Motor neuron (in vitro differentiated cells): ENCODE measurements at regions of chr4 and their contacts with region 1.

Region 1: GRCh38 chr4:156475322-156475721 is 496.3 kb downstream of the PDGFC start:
- ATAC-seq: peak in 4 of 8 experiments; percentile 30 to 79 (median 68)
- H3K4me3 ChIP-seq: no peak overlapping the region
- H3K27ac ChIP-seq: no peak overlapping the region
- H3K4me1 ChIP-seq: peaks cover 0 to 6% of the 10 kb centered on the region in 2 donors

Region 2: DNA sequence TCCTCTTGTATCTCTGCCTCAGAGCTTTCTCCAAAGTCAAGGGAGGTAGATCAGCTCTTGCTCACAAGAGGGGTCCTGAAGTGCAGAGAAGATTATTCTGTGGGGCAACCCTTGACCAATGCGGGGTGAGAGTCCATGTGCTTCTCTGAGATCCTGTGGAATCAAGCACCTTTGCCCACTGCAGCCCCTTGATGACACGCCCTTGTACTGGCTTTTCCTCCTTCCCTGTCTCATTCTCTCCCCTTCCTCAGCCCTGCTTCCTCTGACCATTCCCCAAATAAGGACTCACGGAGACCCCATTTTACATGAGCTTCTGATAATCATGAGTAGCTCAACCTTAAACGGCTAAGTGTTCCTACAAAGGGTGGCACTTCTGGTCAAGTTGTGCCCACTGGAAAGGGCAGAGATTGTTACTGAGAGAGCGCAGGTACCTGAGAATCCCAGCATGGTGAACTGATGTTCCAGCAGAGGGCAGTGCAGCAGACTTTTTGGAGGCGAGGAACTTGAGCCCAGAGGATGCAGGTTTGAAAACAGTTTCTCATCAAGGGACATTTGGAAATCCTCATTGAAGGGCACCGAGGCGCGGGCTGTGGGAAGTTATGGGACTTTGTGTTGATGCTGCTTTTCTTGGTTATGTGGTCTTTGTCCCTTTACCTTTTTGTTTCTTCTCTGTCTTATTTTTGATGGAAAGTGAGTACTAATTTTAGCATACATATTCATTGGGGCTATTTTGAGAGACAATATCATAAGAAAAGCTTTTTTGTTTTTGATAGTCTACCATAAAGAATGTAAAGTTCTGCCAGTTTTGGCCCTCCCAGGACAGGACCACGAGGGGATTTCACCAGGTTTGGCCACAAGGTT is 1492.9 kb before region 1 on chr4:
- in situ Hi-C with region 1: no loop called
- ATAC-seq: peak in 6 of 8 experiments; percentile 42 to 95 (median 70)
- H3K4me3 ChIP-seq: no peak overlapping the region
- H3K27ac ChIP-seq: no peak overlapping the region
- H3K4me1 ChIP-seq: no peaks in the 10 kb centered on the region

Region 3: DNA sequence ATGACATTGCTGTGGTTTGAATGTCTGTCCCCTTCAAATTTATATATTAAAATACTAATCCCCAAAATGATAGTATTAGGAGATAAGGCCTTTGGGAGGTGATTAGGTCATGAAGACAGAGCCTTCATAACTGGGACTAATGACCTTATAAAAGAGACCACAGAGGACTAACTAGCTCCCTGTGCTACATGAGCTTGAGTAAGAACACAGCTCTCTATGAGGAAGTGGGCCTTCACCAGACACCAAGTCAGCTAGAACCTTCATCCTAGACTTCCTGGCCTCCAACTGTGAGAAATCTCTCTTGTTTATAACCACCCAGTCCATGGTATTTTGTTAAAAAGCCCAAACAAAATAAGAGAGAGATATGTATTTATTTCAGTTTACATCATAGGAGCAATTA is 279.4 kb before region 1 on chr4:
- in situ Hi-C with region 1: loop called in 1 of 9 experiments (anchors 25 kb)
- ATAC-seq: no peak
- H3K4me3 ChIP-seq: no peak overlapping the region
- H3K27ac ChIP-seq: no peak overlapping the region
- H3K4me1 ChIP-seq: no peaks in the 10 kb centered on the region

Region 4: DNA sequence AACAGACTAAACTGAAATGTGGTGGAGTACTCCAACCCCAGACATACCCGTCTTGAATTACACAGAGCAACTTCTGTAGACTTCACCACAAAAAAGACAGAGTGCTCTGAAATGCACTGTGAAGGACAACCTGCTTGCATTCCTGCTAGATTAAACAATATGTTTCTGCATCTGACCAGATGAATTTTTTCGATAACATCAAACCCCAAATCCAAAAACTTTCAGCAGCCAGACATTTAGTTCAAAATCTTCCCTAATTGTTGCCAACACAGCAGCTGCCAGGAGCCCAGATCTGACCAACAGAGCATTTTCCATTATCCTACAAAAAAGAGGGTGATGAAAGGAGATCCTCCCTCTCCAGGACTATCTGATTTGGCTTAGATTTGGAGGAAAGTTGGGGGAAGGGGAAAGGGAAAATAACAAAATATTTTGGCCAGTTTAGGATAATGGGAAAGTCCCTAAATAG is 139.8 kb after region 1 on chr4:
- in situ Hi-C with region 1: no loop called
- ATAC-seq: peak in 2 of 8 experiments; percentile 43 to 65
- H3K4me3 ChIP-seq: no peak overlapping the region
- H3K27ac ChIP-seq: no peak overlapping the region
- H3K4me1 ChIP-seq: peaks cover 0 to 3% of the 10 kb centered on the region in 2 donors

Region 5: DNA sequence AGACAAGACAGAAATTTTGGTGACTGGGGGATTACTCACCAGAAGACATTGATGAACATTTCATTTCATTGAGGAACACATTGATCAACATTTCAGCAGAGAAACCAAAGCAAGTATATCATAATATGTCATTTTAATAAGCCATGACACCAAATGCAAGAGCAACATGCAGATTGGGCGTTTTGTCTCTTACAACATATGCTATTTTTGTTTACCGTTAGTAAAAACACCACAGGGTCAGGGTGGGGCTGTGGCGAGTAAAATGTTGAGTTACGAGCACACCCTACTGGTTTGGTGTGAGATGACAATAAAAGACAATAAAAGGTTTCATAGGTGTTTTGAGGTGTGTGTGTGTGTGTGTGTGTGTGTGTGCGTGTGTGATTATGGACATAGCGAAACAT is 201.8 kb after region 1 on chr4:
- in situ Hi-C with region 1: loop called in 2 of 9 experiments (anchors 25 kb)
- ATAC-seq: peak in 4 of 8 experiments; percentile 40 to 86 (median 83)
- H3K4me3 ChIP-seq: no peak overlapping the region
- H3K27ac ChIP-seq: no peak overlapping the region
- H3K4me1 ChIP-seq: peaks cover 0 to 2% of the 10 kb centered on the region in 2 donors

Region 6: DNA sequence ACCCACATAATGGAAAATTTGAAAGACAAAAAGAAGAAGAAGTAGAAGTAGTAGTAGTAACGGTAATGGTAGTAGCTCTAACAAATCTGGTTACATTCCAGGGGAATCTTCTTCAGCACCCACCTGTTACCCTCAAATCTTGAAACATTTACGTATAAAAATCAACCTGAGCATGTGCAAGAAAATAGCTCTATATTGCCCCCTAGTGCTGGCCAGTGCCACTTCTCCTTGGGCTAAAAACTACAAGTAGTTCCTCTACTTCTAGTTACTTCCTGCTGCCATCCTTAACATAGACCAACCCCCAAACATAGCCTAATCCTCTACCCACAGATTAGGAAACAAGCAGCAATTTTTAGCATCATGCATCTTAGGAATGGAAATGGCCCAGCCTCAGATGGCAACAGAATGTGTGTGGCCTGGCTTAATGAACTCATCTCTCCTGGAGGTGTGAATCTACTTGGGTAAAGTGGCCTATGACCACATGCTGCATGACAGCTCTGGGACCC is 493.2 kb after region 1 on chr4:
- in situ Hi-C with region 1: loop called in 2 of 9 experiments (anchors 25 kb)
- ATAC-seq: peak in 2 of 8 experiments; percentile 5
- H3K4me3 ChIP-seq: peak overlapping the region in 4 of 5 donors; percentile 55 to 96 (median 76)
- H3K27ac ChIP-seq: no peak overlapping the region
- H3K4me1 ChIP-seq: peaks cover 10 to 14% of the 10 kb centered on the region in 2 donors

Region 7: GRCh38 chr4:157045507-157046127 is 570.3 kb after region 1 on chr4:
- in situ Hi-C with region 1: loop called in 1 of 9 experiments (anchors 10 kb)
- ATAC-seq: peak in 6 of 8 experiments; percentile 42 to 94 (median 84)
- H3K4me3 ChIP-seq: no peak overlapping the region
- H3K27ac ChIP-seq: no peak overlapping the region
- H3K4me1 ChIP-seq: no peaks in the 10 kb centered on the region